ENCODE measurements at regions of chr4 and their contacts with region 1.

Region 1: GRCh38 chr4:40086421-40086820 is 29.8 kb downstream of the N4BP2 start:
- DNase-seq: no peak
- ATAC-seq: no peak
- H3K4me3 ChIP-seq: no peak overlapping the region
- H3K4me3 Mint-ChIP-seq: no peak overlapping the region
- H3K27ac ChIP-seq: no peak overlapping the region
- H3K27ac Mint-ChIP-seq: no peak overlapping the region
- H3K4me1 ChIP-seq: no peaks in the 10 kb centered on the region
- H3K4me1 Mint-ChIP-seq: peaks cover 8 to 21% (median 15%) of the 10 kb centered on the region in 3 donors
- H3K27me3 ChIP-seq: no peaks in the 10 kb centered on the region
- H3K27me3 Mint-ChIP-seq: no peaks in the 10 kb centered on the region

Region 2: DNA sequence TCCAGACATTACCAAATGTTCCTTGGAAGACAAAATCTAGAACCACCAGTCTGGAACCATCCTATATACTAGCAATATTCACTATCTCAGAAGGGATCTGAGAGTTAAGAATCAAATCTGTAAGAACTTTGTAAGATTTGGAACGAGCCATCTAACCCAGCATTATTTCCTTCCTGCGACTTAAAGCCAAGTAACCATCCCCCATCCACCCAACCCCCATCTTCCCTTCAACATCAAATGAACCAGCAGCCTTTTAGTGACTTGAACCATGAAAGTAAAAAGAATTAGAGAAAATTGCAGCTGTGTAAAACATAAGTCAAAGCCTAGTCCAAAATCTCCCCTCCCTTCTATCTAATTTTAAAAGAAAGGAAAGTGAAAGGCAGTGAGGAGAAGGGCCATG is 527.6 kb after region 1 on chr4:
- CTCF ChIA-PET with region 1: no interaction called
- POLR2A ChIA-PET with region 1: interaction called in 1 of 2 experiments, 11 read pairs
- DNase-seq: no peak
- ATAC-seq: no peak
- H3K4me3 ChIP-seq: no peak overlapping the region
- H3K4me3 Mint-ChIP-seq: peak overlapping the region in 1 of 3 donors; percentile 11
- H3K27ac ChIP-seq: no peak overlapping the region
- H3K27ac Mint-ChIP-seq: no peak overlapping the region
- H3K4me1 ChIP-seq: peaks cover 0 to 17% of the 10 kb centered on the region in 2 experiments
- H3K4me1 Mint-ChIP-seq: peaks cover 5 to 21% (median 12%) of the 10 kb centered on the region in 3 donors
- H3K27me3 ChIP-seq: peaks cover 0 to 12% of the 10 kb centered on the region in 2 experiments
- H3K27me3 Mint-ChIP-seq: peaks cover 0 to 3% of the 10 kb centered on the region in 2 donors

Measured in T-cell (primary cell).